PC-9 (cell line): ENCODE measurements at regions of chr17 and their contacts with region 1.

Region 1: GRCh38 chr17:14205989-14206461 is 30.6 kb downstream of the CDRT15 start:
- DNase-seq: peak; percentile 94 to 95
- H3K4me3 ChIP-seq: no peak overlapping the region
- H3K27ac ChIP-seq: no peak overlapping the region
- H3K4me1 ChIP-seq: 0 out of 2 replicates have a peak, but pooled peaks cover 10% of the 10 kb centered on the region
- H3K27me3 ChIP-seq: no peaks in the 10 kb centered on the region
- CTCF ChIP-seq: no peak

Region 2: GRCh38 chr17:14061666-14062560 is 144.1 kb before region 1 on chr17:
- CTCF ChIA-PET with region 1: no interaction called
- POLR2A ChIA-PET with region 1: no interaction called
- intact Hi-C with region 1: loop called (anchors 1 kb)
- DNase-seq: peak; percentile 37 to 74
- H3K4me3 ChIP-seq: no peak overlapping the region
- H3K27ac ChIP-seq: no peak overlapping the region
- H3K4me1 ChIP-seq: no peaks in the 10 kb centered on the region
- H3K27me3 ChIP-seq: no peaks in the 10 kb centered on the region
- CTCF ChIP-seq: no peak

Region 3: GRCh38 chr17:14069251-14070021 is 136.6 kb before region 1 on chr17 and contains the start of gene COX10:
- CTCF ChIA-PET with region 1: no interaction called
- POLR2A ChIA-PET with region 1: no interaction called
- intact Hi-C with region 1: loop called (anchors 2 kb)
- DNase-seq: peak; percentile 76 to 89
- H3K4me3 ChIP-seq: peak within 1 kb of the TSS; percentile 97
- H3K27ac ChIP-seq: peak within 1 kb of the TSS; percentile 59
- H3K4me1 ChIP-seq: peaks cover 11% of the 10 kb centered on the region
- H3K27me3 ChIP-seq: no peaks in the 10 kb centered on the region
- CTCF ChIP-seq: no peak
- total RNA-seq, gene COX10: 16.2 and 22.6 TPM in 2 replicates

Region 4: GRCh38 chr17:14330486-14331029 is 124.5 kb after region 1 on chr17:
- CTCF ChIA-PET with region 1: no interaction called
- POLR2A ChIA-PET with region 1: no interaction called
- intact Hi-C with region 1: no loop called
- DNase-seq: no peak
- H3K4me3 ChIP-seq: no peak overlapping the region
- H3K27ac ChIP-seq: no peak overlapping the region
- H3K4me1 ChIP-seq: no peaks in the 10 kb centered on the region
- H3K27me3 ChIP-seq: peaks cover 27% of the 10 kb centered on the region; the same call in 1 of the 2 replicates
- CTCF ChIP-seq: no peak